GM10248 (cell line): ENCODE measurements at regions of chr15 and their contacts with region 1.

Region 1: GRCh38 chr15:91055548-91056331 is 33.3 kb upstream of the VPS33B start:
- DNase-seq: peak; percentile 64
- CTCF ChIP-seq: peak; percentile 77

Region 2: DNA sequence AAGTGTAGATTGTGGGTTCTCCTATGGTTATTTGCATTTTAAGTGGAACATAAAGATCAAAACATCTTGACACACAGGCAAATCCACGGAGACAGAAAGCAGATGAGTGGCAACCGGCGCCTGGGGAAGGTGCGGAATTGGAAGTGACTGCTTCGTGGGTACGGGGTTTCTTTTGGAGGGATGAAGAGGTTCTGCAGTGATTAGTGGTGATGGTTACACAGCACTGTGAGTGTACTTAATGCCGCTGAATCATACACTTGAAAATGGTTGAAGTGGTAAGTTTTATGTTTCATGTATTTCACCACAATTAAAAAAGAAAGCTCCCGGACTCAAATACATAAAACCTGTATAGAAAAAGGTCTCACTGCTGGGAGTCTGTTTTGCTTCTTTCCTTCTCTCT is 14.9 kb before region 1 on chr15:
- CTCF ChIA-PET with region 1: interaction called, 12 read pairs
- POLR2A ChIA-PET with region 1: no interaction called
- DNase-seq: no peak
- CTCF ChIP-seq: no peak

Region 3: GRCh38 chr15:91099616-91099994 is 43.9 kb after region 1 on chr15:
- CTCF ChIA-PET with region 1: interaction called, 19 read pairs
- POLR2A ChIA-PET with region 1: no interaction called
- DNase-seq: peak; percentile 43
- CTCF ChIP-seq: peak; percentile 24

Region 4: GRCh38 chr15:91142114-91142731 is 86.5 kb after region 1 on chr15:
- CTCF ChIA-PET with region 1: interaction called, 23 read pairs
- POLR2A ChIA-PET with region 1: no interaction called
- DNase-seq: peak; percentile 26
- CTCF ChIP-seq: peak; percentile 63

Region 5: DNA sequence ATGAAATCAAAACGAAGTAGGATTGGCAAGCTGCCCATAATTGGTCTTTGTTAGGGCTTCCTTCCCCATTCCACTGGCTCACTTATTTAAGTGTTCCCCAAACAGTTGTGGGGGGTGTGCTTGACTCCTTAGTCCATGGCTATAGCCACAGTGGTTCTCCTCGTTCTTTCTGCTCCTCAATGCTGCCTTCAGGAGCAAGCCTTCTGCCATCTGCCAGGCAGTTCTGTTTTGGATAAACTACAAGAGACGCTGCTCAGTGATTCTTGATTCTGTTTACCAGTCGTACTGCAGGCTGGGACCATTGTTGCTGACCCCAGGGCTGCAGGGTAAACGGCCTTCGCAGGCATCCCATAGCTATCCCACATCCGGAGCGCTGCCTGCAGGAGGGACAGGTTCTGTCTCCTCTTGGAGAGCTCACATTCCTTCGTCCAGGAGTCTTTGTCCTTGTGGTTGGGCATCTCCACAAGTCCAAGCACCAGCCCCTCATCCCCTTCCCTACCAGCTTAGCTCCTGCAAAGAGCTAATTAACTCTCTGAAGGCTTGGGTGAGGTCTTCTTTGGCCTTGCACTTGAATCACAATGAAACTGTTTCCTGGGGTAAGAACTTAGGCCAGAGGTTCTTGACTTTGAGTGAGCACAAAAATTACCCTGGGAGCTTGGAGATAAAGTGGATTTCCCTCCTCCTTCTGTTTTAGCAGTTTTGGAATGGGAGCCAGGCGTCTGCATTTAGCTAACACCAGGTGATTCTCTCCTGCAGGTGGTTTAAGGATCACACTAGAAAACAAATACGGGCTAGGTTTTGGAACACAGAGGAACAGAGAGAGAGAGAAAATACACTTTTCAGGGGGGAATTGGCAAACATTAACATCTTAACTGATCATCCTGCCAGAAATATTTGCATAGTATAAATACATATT is 159.2 kb after region 1 on chr15:
- CTCF ChIA-PET with region 1: interaction called, 28 read pairs
- POLR2A ChIA-PET with region 1: no interaction called
- DNase-seq: no peak
- CTCF ChIP-seq: no peak

Region 6: GRCh38 chr15:91249591-91249990 is 193.9 kb after region 1 on chr15:
- CTCF ChIA-PET with region 1: interaction called, 30 read pairs
- POLR2A ChIA-PET with region 1: no interaction called
- DNase-seq: no peak
- CTCF ChIP-seq: no peak

Region 7: GRCh38 chr15:91271565-91272153 is 215.9 kb after region 1 on chr15:
- CTCF ChIA-PET with region 1: interaction called, 93 read pairs
- POLR2A ChIA-PET with region 1: no interaction called
- DNase-seq: peak; percentile 54
- CTCF ChIP-seq: peak; percentile 84